K562 (cell line): ENCODE measurements at regions of chr1 and their contacts with region 1.

Region 1: GRCh38 chr1:6743189-6744101 is 41.8 kb upstream of the CAMTA1 start:
- DNase-seq: peak in 2 of 4 experiments; percentile 9 to 40
- ATAC-seq: peak; percentile 75
- H3K4me3 ChIP-seq: no peak overlapping the region
- H3K27ac ChIP-seq: 0 out of 3 replicates have a peak overlapping the region, but pooled peaks have one; percentile 9
- H3K4me1 ChIP-seq: peaks cover 9 to 15% of the 10 kb centered on the region in 2 experiments; a peak in 4 of 5 replicates
- H3K27me3 ChIP-seq: peaks cover 9 to 37% of the 10 kb centered on the region in 2 experiments
- CTCF ChIP-seq: no peak
- EP300 ChIP-seq: no peak
- POLR2A ChIP-seq: no peak
- RAD21 ChIP-seq: no peak

Region 2: GRCh38 chr1:6962996-6963911 is 219.8 kb after region 1 on chr1:
- CTCF ChIA-PET with region 1: no interaction called
- POLR2A ChIA-PET with region 1: no interaction called
- in situ Hi-C with region 1: no loop called
- intact Hi-C with region 1: loop called (anchors 5 kb)
- DNase-seq: peak; percentile 82 to 96 (median 94)
- ATAC-seq: peak; percentile 80
- H3K4me3 ChIP-seq: peak overlapping the region; percentile 28; the same call in 1 of the 2 replicates
- H3K27ac ChIP-seq: no peak overlapping the region
- H3K4me1 ChIP-seq: peaks cover 0 to 22% of the 10 kb centered on the region in 2 experiments; a peak in 4 of 5 replicates
- H3K27me3 ChIP-seq: peaks cover 42 to 61% of the 10 kb centered on the region in 2 experiments
- CTCF ChIP-seq: peak; percentile 33 to 58 (median 51); a peak in 4 of 6 replicates
- EP300 ChIP-seq: no peak
- POLR2A ChIP-seq: no peak
- RAD21 ChIP-seq: peak in 1 of 2 experiments; percentile 48; a peak in 2 of 4 replicates